Activated CD4-positive, alpha-beta T cell treated with anti-CD3 and anti-CD28 coated beads, Interleukin-2, amount 10 ng/mL, durations not matched to agents 24 days and 14 days (primary cell): ENCODE measurements at regions of chr11 and their contacts with region 1.

Region 1: GRCh38 chr11:44319552-44320288 is 9.8 kb upstream of the ALX4 start:
- DNase-seq: no peak
- H3K4me3 Mint-ChIP-seq: no peak overlapping the region
- H3K27ac Mint-ChIP-seq: no peak overlapping the region
- H3K4me1 Mint-ChIP-seq: peaks cover 1% of the 10 kb centered on the region
- H3K27me3 Mint-ChIP-seq: peaks cover 92% of the 10 kb centered on the region

Region 2: GRCh38 chr11:44223238-44223637 is 96.5 kb before region 1 on chr11:
- intact Hi-C with region 1: no loop called
- DNase-seq: no peak
- H3K4me3 Mint-ChIP-seq: no peak overlapping the region
- H3K27ac Mint-ChIP-seq: no peak overlapping the region
- H3K4me1 Mint-ChIP-seq: peaks cover 5% of the 10 kb centered on the region
- H3K27me3 Mint-ChIP-seq: no peaks in the 10 kb centered on the region

Region 3: GRCh38 chr11:44309483-44310205 is 10.1 kb before region 1 on chr11 and contains the start of gene ALX4:
- intact Hi-C with region 1: loop called (anchors 1 kb)
- DNase-seq: peak; percentile 77
- H3K4me3 Mint-ChIP-seq: peak within 1 kb of the TSS; percentile 50
- H3K27ac Mint-ChIP-seq: peak within 1 kb of the TSS; percentile 41
- H3K4me1 Mint-ChIP-seq: peaks cover 28% of the 10 kb centered on the region
- H3K27me3 Mint-ChIP-seq: peaks cover 93% of the 10 kb centered on the region
- total RNA-seq, gene ALX4: not detected in 2 replicates